ENCODE measurements at regions of chr6 and their contacts with region 1.

Region 1: GRCh38 chr6:79570129-79571029 is 33.1 kb upstream of the LCA5 start:
- DNase-seq: no peak
- H3K4me3 ChIP-seq: peak overlapping the region; percentile 52
- H3K27ac ChIP-seq: no peak overlapping the region
- H3K4me1 ChIP-seq: peaks cover 12% of the 10 kb centered on the region
- H3K27me3 ChIP-seq: no peaks in the 10 kb centered on the region
- CTCF ChIP-seq: peak; percentile 78

Region 2: GRCh38 chr6:79461205-79461604 is 109.2 kb before region 1 on chr6:
- intact Hi-C with region 1: no loop called
- DNase-seq: no peak
- H3K4me3 ChIP-seq: no peak overlapping the region
- H3K27ac ChIP-seq: no peak overlapping the region
- H3K4me1 ChIP-seq: no peaks in the 10 kb centered on the region
- H3K27me3 ChIP-seq: no peaks in the 10 kb centered on the region
- CTCF ChIP-seq: no peak

Region 3: GRCh38 chr6:79512014-79512413 is 58.4 kb before region 1 on chr6:
- intact Hi-C with region 1: no loop called
- DNase-seq: no peak
- H3K4me3 ChIP-seq: no peak overlapping the region
- H3K27ac ChIP-seq: no peak overlapping the region
- H3K4me1 ChIP-seq: no peaks in the 10 kb centered on the region
- H3K27me3 ChIP-seq: no peaks in the 10 kb centered on the region
- CTCF ChIP-seq: no peak

Region 4: GRCh38 chr6:79630883-79631692 is 60.7 kb after region 1 on chr6 and contains the start of gene SH3BGRL2:
- intact Hi-C with region 1: no loop called
- DNase-seq: peak; percentile 74
- H3K4me3 ChIP-seq: peak within 1 kb of the TSS; percentile 87
- H3K27ac ChIP-seq: peak within 1 kb of the TSS; percentile 81
- H3K4me1 ChIP-seq: peaks cover 36% of the 10 kb centered on the region
- H3K27me3 ChIP-seq: no peaks in the 10 kb centered on the region
- CTCF ChIP-seq: no peak
- total RNA-seq, gene SH3BGRL2: 5.8 TPM

Region 5: DNA sequence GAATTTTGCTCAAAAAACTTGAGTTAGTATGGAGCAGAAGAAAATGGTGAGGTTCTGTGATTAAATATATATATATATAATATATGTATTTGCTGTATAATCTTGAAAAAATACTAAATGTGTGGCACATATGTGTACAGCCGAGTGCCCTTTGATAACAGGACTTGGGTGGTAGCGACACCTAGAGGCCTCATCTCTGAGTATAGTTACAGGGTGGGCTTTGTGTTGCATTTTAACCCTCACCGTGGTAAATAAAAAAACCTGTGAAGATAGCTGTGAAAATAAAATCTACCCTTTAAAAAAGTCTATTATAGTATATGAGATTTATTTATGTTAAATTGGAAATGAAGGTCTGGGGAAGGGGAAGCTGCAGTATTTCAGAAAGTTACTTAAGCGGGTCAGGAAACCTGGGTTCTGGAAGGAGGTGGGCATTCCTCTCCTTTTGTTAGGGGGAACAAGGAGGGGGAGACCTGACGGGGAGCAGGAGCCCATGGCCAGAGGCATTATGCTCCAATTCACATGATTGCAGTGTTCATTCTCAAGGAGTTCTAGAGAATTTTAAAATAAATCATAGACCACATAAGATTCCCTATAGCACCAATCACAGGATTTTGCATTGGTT is 143.4 kb after region 1 on chr6:
- intact Hi-C with region 1: loop called (anchors 5 kb)
- DNase-seq: peak; percentile 16
- H3K4me3 ChIP-seq: no peak overlapping the region
- H3K27ac ChIP-seq: no peak overlapping the region
- H3K4me1 ChIP-seq: peaks cover 14% of the 10 kb centered on the region
- H3K27me3 ChIP-seq: no peaks in the 10 kb centered on the region
- CTCF ChIP-seq: peak; percentile 79

Region 6: DNA sequence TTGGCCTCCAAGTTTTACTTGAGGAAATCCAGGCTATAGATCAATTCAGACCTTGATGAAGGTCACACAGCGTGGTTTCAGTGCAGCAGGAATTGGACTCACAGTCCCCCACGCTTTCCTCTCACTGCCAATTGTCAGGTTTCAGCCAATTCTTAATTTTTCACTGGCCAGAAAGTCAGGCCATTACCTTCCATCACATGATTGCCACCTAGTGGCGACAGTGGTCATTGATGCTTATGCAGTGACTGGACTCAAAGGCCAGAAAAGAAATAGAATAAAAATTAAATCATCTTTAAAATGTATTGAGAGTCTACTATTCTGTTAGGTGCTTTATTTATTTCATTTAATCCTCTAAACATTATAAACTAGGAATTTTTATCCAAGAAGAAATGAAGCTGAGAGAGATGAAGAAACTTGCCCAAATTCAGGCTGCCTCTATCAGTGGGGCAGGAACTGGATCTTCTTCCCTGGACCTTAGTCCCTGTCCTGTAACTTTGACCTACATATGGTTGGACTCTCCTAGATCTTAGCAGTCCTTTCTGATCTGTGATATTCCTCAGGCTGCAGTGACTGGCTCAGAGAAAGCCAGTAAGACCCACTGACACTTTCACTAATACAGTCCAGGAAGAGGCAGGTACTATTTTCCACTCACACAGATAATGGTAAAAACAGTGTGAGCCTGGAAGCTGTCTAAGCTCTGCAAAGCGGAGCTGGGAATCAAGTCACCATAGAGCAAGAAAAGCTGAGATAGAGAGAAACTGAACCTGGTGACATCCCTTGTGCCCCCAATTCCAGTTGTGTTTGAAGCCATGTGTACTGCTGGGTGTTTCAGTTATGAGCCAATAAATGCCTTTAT is 243.7 kb after region 1 on chr6:
- intact Hi-C with region 1: loop called (anchors 10 kb)
- DNase-seq: peak; percentile 46
- H3K4me3 ChIP-seq: no peak overlapping the region
- H3K27ac ChIP-seq: no peak overlapping the region
- H3K4me1 ChIP-seq: no peaks in the 10 kb centered on the region
- H3K27me3 ChIP-seq: no peaks in the 10 kb centered on the region
- CTCF ChIP-seq: peak; percentile 90